ENCODE measurements at regions of chr1 and their contacts with region 1.

Region 1: GRCh38 chr1:154911691-154912550 is 24.6 kb downstream of the PMVK start:
- DNase-seq: no peak

Region 2: DNA sequence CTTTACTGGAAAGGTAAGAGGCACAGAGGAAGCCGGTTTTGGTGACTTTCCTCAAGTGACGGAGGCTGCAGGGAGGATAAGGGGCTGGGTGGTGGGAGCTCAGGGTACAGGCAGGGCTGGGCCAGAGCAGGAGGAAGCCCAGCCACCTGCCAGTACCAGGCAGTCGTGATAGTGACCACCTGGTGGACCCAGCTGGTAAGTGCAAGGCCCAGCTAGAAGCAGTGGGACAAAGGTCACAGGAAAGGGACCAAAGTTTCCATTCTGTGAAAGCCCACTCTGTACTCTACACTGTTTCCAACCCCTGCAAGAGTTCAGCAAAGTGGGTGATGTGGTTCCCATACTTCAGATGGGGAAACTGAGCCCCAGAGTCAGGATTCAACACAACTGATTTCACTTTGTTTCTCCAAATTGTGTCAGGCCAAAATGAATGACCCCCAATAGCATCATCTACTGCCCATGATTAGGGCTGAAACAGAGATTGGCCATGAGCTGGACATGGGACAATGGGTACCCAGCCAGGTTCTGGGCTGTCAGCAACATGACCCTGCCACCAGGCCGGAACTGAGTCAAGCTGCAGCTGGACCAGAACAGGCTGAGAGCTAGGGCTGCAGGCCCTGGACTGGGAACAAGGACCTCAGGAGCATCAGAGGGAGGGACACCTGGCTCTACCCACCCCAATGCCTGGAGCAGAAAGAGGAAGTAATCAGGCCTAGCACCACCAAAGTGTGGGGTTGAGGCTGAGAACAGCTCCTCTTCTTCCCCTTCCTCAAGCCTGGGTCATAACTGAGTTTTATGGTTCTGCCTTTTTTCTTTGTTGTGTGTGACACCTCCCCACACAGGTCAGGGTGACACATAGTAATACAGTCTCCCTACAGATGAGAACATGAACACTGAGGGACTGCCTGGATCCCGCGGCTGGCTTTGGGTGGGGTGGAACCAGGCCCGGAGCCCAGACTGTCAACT is 92.0 kb before region 1 on chr1:
- in situ Hi-C with region 1: loop called (anchors 10 kb)
- DNase-seq: peak; percentile 62